Spleen (tissue), 13 donors: ENCODE measurements at regions of chr2 and their contacts with region 1.

Region 1: GRCh38 chr2:152627351-152627957 is 89.8 kb downstream of the PRPF40A start:
- DNase-seq: no peak
- H3K4me3 ChIP-seq: no peak overlapping the region
- H3K27ac ChIP-seq: no peak overlapping the region
- H3K4me1 ChIP-seq: peaks cover 0 to 13% (median 2%) of the 10 kb centered on the region in 6 donors
- H3K27me3 ChIP-seq: no peaks in the 10 kb centered on the region
- CTCF ChIP-seq: peak in 9 of 11 experiments; percentile 34 to 59 (median 55)
- POLR2A ChIP-seq: no peak

Region 2: GRCh38 chr2:152189622-152190495 is 437.6 kb before region 1 on chr2:
- intact Hi-C with region 1: loop called (anchors 5 kb)
- DNase-seq: no peak
- H3K4me3 ChIP-seq: no peak overlapping the region
- H3K27ac ChIP-seq: no peak overlapping the region
- H3K4me1 ChIP-seq: no peaks in the 10 kb centered on the region
- H3K27me3 ChIP-seq: peaks cover 0 to 16% (median 0%) of the 10 kb centered on the region in 7 donors
- CTCF ChIP-seq: peak; percentile 29 to 82 (median 58)
- POLR2A ChIP-seq: no peak

Region 3: GRCh38 chr2:152347076-152347475 is 280.4 kb before region 1 on chr2:
- intact Hi-C with region 1: loop called (anchors 10 kb)
- DNase-seq: no peak
- H3K4me3 ChIP-seq: no peak overlapping the region
- H3K27ac ChIP-seq: no peak overlapping the region
- H3K4me1 ChIP-seq: no peaks in the 10 kb centered on the region
- H3K27me3 ChIP-seq: no peaks in the 10 kb centered on the region
- CTCF ChIP-seq: no peak
- POLR2A ChIP-seq: no peak